ENCODE measurements at regions of chr19 and their contacts with region 1.

Region 1: DNA sequence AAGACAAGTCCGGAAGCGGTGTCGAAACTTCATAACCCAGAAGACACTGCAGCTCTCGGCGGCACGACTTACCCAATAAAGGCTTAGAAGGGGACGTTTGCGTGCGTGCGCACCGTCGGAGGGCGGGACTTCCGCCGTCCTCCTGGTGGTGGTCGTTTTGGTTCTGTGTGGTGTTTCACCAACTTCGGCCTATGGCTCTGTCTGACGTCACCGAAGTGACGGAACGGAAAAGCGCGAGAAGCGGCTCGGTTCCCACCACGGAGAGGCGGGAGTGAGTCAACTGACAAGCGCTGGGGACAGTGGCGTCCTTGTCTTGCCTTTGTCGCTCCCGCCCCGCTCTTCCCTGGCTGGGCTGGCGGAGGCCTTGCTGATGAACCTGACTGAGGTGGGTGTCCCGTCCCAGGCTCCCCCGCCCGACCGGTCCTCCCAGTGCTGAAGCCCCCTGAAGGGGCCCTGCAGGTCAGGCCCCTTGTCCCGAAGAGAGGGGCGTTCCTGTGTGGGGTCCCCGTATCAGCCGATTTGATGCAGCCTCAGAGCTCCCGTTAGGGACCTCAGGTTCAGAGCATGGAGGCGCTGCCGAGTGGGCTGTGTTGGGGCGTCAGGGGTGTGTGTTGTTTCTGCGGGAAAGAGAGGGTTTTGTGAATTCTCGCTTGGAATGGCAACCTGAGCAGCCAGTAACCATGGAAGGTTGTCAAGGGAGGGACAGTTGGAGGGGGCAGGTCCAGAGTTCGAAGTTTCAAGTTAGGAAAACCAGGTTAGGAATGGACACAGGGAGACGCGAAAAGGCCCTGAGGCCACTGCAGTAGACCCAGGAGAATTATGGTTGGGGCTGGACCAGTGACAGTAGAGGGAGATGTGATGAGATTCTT is at the start of gene ZNF548:
- DNase-seq: peak; percentile 97
- ATAC-seq: peak; percentile 99
- H3K4me3 Mint-ChIP-seq: peak within 1 kb of the TSS; percentile 90
- H3K27ac Mint-ChIP-seq: peak within 1 kb of the TSS; percentile 94
- H3K4me1 Mint-ChIP-seq: peaks cover 26% of the 10 kb centered on the region
- H3K27me3 Mint-ChIP-seq: no peaks in the 10 kb centered on the region
- total RNA-seq, gene ZNF548: 15.1 to 20.3 TPM

Region 2: DNA sequence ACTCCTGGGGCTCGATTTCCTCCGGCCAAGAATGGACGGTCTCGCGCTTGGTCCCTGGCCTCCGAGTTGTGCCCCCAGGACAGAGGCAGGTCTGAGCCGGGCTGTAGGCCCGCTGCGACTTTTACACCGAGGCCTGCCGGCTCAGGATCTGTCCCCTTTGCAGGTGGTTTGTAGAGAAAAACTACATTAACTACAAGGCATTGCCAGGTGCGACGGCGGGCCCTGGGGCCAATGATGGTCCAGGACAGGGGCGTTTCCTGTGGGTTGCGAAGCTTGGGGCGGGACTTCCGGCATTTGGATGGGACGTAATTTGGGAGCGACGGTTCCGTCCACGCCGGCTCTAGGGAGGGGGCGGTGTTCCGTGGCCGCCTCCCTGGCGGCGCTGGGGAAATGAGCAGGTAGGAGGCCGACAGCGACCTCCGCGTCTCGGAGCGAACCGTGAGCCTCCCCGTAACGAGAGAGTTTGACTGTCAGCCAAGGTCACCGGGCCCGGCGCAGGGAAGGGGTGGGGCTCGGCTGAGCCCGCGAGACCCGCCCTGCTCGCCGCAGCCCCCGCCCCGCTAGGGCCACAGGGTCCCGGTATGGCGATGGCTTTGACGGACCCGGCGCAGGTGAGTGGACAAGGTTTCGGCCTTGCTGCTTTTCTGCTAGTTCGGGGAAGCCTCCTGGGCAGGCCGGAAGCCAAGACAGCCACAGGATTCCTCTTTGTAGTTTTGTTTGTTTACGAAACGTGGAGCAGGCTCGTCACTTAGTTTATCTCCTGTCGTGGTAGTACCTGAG is 149.5 kb before region 1 on chr19 and contains the start of gene ZNF805:
- CTCF ChIA-PET with region 1: no interaction called
- POLR2A ChIA-PET with region 1: no interaction called
- intact Hi-C with region 1: loop called in 1 of 2 experiments (anchors 1 kb)
- DNase-seq: peak; percentile 97
- ATAC-seq: peak; percentile 95
- H3K4me3 Mint-ChIP-seq: peak within 1 kb of the TSS; percentile 80
- H3K27ac Mint-ChIP-seq: peak within 1 kb of the TSS; percentile 92
- H3K4me1 Mint-ChIP-seq: peaks cover 23% of the 10 kb centered on the region
- H3K27me3 Mint-ChIP-seq: no peaks in the 10 kb centered on the region
- total RNA-seq, gene ZNF805: 6.4 to 7.1 TPM

Region 3: DNA sequence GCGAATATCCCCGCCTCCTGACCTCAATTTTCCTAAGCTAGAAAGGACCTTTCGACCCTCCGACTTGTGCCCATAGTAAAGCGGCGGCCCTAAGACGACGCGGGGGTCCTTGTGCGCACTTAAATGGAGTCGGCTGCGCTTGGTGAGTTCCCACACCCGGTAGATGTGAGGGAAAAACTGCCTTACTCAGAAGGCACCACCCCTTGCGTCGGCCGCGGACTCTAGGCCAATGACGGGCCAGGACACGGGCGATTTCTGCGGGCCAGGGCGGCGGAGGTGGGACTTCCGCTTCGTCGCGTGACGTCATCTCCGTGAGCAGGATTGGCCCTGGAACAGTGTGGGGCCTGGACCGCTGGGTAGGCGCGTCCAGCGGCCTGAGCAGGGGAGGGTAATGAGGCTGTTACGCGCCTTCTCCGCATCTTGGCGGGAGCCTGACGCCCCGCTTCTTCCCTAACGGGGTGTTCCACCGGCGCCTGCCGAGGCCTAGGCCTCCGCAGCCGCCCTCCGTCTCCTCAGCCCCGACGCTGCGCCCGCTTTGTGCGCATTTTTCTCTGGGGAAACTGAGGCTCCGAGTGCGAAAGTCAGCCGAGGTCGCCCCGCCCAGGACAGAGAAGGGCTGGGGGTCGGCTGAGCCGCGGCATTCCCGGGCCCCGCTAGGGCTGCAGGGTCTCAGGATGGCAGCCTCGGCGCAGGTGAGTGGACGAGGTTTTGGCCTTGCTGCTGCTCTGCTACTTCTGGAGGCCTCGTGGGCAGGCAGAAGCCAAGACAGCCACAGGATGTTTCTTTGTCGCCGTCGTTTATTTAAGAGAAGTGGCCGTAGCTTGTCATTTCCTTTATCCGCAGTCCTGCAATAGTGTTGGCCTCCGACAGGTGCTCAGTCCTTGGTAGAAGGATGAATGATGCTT is 69.5 kb before region 1 on chr19 and contains the start of gene ZNF543:
- CTCF ChIA-PET with region 1: no interaction called
- POLR2A ChIA-PET with region 1: no interaction called
- intact Hi-C with region 1: loop called in 1 of 2 experiments (anchors 1 kb)
- DNase-seq: peak; percentile 97
- ATAC-seq: peak; percentile 98
- H3K4me3 Mint-ChIP-seq: peak within 1 kb of the TSS; percentile 94
- H3K27ac Mint-ChIP-seq: peak within 1 kb of the TSS; percentile 93
- H3K4me1 Mint-ChIP-seq: peaks cover 24% of the 10 kb centered on the region
- H3K27me3 Mint-ChIP-seq: peaks cover 22% of the 10 kb centered on the region
- total RNA-seq, gene ZNF543: 5.8 to 6.2 TPM

Region 4: DNA sequence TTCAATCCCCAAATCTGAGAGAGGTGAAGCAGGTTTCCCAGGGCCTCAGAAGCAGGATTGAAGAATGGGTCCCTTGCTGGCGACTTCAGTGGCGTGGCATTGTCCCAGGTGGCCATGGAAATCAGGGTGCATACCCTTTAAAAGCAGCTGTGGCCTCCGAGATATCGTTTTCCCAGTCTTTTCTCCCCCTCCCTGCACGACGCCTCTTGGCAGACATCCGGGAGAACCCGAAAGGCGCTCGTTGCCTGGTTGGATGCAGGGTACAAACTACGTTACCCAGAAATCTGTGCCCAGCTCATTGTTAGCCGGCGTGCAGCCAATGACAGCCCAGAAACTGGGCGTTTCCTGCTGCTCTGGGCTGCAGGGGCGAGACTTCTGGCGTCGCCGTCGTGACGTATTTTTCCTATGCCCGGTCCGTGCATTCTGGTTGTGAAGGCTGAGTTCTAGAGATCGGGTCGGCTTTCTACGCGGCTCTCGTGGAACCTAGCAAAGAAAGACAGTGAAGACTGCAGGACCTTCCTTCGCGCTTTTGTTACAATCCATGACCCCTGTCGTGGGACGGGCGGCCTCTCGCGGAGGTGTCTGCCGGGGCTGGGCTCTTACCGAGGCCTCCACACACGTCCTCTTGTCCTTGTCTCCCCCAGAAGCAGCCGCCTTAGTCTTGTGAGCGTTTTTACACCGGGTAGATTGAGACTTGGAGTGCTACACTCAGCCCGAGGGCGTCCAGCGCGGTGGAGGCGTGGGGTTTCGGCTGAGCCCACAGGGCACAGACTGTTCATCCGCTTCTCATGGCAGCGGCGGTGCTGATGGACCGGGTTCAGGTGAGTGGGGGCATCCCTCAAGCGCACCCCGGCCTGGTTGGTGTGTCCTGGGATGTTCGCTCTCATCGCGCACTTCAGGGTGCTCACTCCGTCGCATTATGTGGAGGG is 38.8 kb before region 1 on chr19 and contains the start of gene ZNF304:
- CTCF ChIA-PET with region 1: no interaction called
- POLR2A ChIA-PET with region 1: interaction called, 4 read pairs
- intact Hi-C with region 1: loop called in 1 of 2 experiments (anchors 1 kb)
- DNase-seq: peak; percentile 94
- ATAC-seq: peak; percentile 100
- H3K4me3 Mint-ChIP-seq: peak within 1 kb of the TSS; percentile 96
- H3K27ac Mint-ChIP-seq: peak within 1 kb of the TSS; percentile 90
- H3K4me1 Mint-ChIP-seq: peaks cover 25% of the 10 kb centered on the region
- H3K27me3 Mint-ChIP-seq: peaks cover 4% of the 10 kb centered on the region
- total RNA-seq, gene ZNF304: 6.2 TPM

Region 5: DNA sequence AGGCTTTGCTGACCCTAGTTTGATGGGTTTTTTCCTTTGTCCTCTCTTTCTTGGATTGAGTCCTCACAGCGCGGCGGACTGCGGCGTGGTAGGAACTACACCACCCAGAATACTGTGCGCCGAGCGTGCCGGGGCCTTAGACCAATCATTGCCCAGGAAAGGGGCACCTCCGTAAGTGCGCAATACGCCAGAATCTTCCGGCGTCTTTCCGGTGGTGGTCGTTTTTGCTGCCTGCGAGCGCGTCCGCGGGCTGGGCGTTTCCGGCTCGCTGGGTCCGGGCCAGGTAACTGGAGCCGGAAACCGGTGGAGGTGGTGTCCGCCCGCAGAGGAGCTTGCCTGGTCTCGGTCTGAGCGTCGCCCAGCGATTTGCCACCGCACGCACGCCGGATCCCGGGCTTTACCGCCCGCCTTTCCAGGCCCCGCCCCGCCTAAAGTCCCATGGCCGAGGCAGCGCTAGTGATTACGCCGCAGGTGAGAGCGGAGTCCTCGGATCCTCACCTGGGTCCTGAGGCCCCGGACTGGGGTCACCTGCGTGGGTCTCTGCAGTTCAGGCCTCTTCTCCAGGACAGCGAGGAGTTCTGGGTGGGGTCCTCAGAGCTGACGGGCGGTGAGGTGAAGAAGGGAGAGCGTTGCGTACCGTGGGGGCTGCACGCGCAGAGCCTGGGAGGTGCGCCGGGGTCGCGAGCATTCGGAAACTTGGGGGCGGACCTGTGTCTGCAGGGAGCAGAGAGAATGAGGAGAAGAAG is 137.3 kb after region 1 on chr19 and contains the start of gene ZNF549:
- CTCF ChIA-PET with region 1: no interaction called
- POLR2A ChIA-PET with region 1: no interaction called
- intact Hi-C with region 1: loop called (anchors 1 kb)
- DNase-seq: peak; percentile 93
- ATAC-seq: peak; percentile 100
- H3K4me3 Mint-ChIP-seq: peak within 1 kb of the TSS; percentile 82
- H3K27ac Mint-ChIP-seq: peak within 1 kb of the TSS; percentile 84
- H3K4me1 Mint-ChIP-seq: peaks cover 18% of the 10 kb centered on the region
- H3K27me3 Mint-ChIP-seq: no peaks in the 10 kb centered on the region
- total RNA-seq, gene ZNF549: 3.7 to 4.6 TPM

Region 6: GRCh38 chr19:57947208-57948134 is 557.5 kb after region 1 on chr19 and contains the start of gene ZNF256:
- CTCF ChIA-PET with region 1: no interaction called
- POLR2A ChIA-PET with region 1: no interaction called
- intact Hi-C with region 1: loop called in 1 of 2 experiments (anchors 1 kb)
- DNase-seq: peak; percentile 95
- ATAC-seq: peak; percentile 99
- H3K4me3 Mint-ChIP-seq: peak within 1 kb of the TSS; percentile 87
- H3K27ac Mint-ChIP-seq: peak within 1 kb of the TSS; percentile 90
- H3K4me1 Mint-ChIP-seq: peaks cover 16% of the 10 kb centered on the region
- H3K27me3 Mint-ChIP-seq: no peaks in the 10 kb centered on the region
- total RNA-seq, gene ZNF256: 6.3 to 6.9 TPM